Vagina (tissue), 2 donors: ENCODE measurements at regions of chr16 and their contacts with region 1.

Region 1: GRCh38 chr16:14529010-14529669 is 100.9 kb downstream of the PARN start:
- DNase-seq: peak in 1 of 2 donors; percentile 91
- H3K4me3 ChIP-seq: peak overlapping the region in 1 of 2 donors; percentile 40
- H3K27ac ChIP-seq: peak overlapping the region; percentile 66
- H3K4me1 ChIP-seq: peaks cover 31% of the 10 kb centered on the region
- H3K27me3 ChIP-seq: no peaks in the 10 kb centered on the region
- CTCF ChIP-seq: peak; percentile 51 to 91 (median 72)
- POLR2A ChIP-seq: no peak

Region 2: DNA sequence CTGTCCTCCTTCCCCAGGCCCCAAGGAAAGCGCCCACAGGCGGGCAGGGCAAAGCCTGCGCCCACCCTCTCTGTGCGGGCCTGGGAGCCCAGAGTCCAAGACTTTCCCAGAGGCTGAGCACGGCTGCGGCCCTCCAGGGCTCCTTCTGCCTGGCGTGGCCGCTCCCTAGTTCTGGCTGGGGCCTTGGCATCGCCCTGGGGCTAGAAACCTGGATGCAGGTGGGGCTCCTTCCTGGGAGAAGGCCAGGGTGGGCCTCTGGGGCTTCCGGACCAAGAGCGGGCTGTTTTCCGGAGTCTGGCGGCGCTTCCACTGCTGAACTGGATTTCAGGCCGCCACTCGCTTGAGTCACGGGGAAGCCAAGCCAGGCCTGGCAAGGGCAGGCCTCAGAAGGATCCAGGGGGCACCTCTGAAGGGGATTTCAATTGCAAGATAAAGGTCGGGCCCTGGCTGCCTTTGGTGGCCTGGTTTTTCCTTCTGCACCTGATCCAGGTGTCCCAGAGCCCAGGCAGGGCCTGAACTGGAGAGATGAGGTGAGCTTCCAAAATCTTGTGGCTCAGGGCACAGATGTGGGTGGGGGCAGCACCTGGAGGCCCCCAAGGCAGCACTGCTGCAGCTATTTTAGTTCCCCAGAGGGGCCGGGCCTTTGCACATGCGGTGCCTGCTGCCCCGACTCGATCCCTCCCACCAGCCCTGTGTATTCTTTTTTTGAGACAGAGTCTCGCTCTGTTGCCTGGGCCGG is 230.6 kb before region 1 on chr16:
- intact Hi-C with region 1: loop called (anchors 5 kb)
- DNase-seq: no peak
- H3K4me3 ChIP-seq: no peak overlapping the region
- H3K27ac ChIP-seq: no peak overlapping the region
- H3K4me1 ChIP-seq: peaks cover 17% of the 10 kb centered on the region
- H3K27me3 ChIP-seq: no peaks in the 10 kb centered on the region
- CTCF ChIP-seq: no peak
- POLR2A ChIP-seq: no peak

Region 3: DNA sequence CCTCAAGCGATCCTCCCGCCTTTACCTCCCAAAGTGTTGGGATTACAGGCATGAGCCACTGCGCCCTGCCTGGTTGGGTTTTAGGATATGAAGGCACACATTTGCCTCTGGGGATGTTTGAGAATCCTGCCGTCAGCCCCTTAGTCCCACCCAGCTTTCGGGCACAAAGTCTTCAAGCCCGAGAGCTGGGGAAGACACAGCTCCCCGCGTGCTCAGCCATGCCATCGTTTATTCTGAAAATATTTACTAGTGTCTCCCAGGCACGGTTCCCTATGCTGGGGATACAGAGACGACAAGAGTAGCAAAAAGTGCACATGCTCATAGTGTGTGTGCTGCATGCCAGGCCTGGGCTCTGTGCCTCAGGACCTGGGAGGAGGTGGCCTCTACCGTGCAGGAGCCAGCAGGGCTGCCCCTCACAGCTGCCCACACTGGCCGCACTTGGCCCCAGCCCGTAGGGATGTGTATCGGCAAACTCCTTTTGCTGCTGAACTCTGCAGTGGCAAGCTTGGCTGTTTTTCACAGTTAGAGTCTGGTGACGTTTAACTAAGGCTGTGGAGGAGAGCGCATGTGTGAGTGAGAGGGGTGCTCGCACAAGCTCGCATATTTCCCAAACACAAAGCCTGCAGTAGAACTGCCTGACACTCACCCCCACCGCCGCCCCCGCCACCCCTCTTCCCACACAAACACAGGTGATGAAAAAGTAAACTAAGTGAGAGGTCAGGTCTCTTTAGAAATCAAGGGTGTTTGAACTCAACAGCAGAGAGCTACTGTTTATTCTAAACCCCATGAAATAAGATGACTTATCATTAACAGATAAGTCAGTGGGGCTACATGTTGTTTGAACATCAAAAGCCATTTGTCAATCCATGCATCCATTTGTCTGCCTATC is 191.6 kb before region 1 on chr16:
- intact Hi-C with region 1: no loop called
- DNase-seq: no peak
- H3K4me3 ChIP-seq: peak overlapping the region in 1 of 2 donors; percentile 29
- H3K27ac ChIP-seq: no peak overlapping the region
- H3K4me1 ChIP-seq: peaks cover 13% of the 10 kb centered on the region
- H3K27me3 ChIP-seq: no peaks in the 10 kb centered on the region
- CTCF ChIP-seq: no peak
- POLR2A ChIP-seq: no peak

Region 4: GRCh38 chr16:14418795-14419225 is 110.3 kb before region 1 on chr16:
- intact Hi-C with region 1: no loop called
- DNase-seq: no peak
- H3K4me3 ChIP-seq: no peak overlapping the region
- H3K27ac ChIP-seq: no peak overlapping the region
- H3K4me1 ChIP-seq: no peaks in the 10 kb centered on the region
- H3K27me3 ChIP-seq: no peaks in the 10 kb centered on the region
- CTCF ChIP-seq: no peak
- POLR2A ChIP-seq: no peak